ENCODE measurements at regions of chr1 and their contacts with region 1.

Region 1: DNA sequence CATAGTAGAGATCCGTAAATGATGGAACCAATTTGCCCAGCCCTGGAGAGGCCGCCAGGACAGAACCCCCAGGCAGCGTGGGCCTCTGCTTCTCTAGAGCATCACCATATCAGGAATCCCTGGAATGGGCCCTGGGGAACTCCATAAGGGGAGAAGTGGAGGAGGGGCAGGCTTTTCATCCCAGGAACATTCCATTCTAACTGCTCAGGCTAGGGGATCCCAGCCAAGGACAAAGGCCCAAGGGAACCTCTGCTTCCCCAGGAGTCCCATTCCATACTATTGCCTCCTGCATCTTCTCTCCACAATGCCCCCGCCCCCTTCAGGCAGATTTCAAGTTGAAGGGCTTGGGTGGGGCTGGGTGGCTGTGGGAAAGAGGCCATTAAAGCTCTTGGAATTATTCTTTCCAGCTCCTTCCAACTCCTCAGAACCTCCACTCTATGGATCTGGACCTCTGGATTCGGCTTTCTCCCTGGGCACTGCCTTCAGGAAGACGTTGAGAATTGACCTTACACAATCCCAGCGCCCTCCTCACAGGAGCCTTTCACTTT is 6.0 kb downstream of the TRNP1 start:
- DNase-seq: peak; percentile 80 to 90
- ATAC-seq: peak; percentile 48 to 56
- H3K4me3 ChIP-seq: peak overlapping the region; percentile 96; the same call in 2 of the 3 replicates
- H3K27ac ChIP-seq: peak overlapping the region; percentile 100
- H3K4me1 ChIP-seq: peaks cover 71% of the 10 kb centered on the region
- CTCF ChIP-seq: no peak
- EP300 ChIP-seq: peak in 1 of 2 experiments; percentile 28; a peak in 1 of 5 replicates
- POLR2A ChIP-seq: no peak
- RAD21 ChIP-seq: peak in 1 of 2 experiments; percentile 4; a peak in 1 of 5 replicates

Region 2: GRCh38 chr1:26959722-26960615 is 39.5 kb before region 1 on chr1 and contains the start of gene KDF1:
- CTCF ChIA-PET with region 1: interaction called, 188 read pairs
- POLR2A ChIA-PET with region 1: interaction called, 3 read pairs
- DNase-seq: no peak
- ATAC-seq: no peak
- H3K4me3 ChIP-seq: peak within 1 kb of the TSS; percentile 32; the same call in 1 of the 3 replicates
- H3K27ac ChIP-seq: peak within 1 kb of the TSS; percentile 48 to 73; a peak in 5 of 6 replicates
- H3K4me1 ChIP-seq: peaks cover 25% of the 10 kb centered on the region
- CTCF ChIP-seq: no peak
- EP300 ChIP-seq: no peak
- POLR2A ChIP-seq: no peak
- RAD21 ChIP-seq: no peak
- polyA plus RNA-seq, gene KDF1: not detected in 2 replicates

Region 3: GRCh38 chr1:27010989-27011764 is 11.7 kb after region 1 on chr1:
- CTCF ChIA-PET with region 1: interaction called, 49 read pairs
- POLR2A ChIA-PET with region 1: interaction called, 5 read pairs
- DNase-seq: peak; percentile 81 to 83
- ATAC-seq: peak; percentile 30 to 38
- H3K4me3 ChIP-seq: no peak overlapping the region
- H3K27ac ChIP-seq: peak overlapping the region; percentile 72 to 83
- H3K4me1 ChIP-seq: peaks cover 53% of the 10 kb centered on the region
- CTCF ChIP-seq: no peak
- EP300 ChIP-seq: no peak
- POLR2A ChIP-seq: no peak
- RAD21 ChIP-seq: 0 out of 5 replicates have a peak, but pooled peaks of 1 of the 2 experiments have one; percentile 15

Region 4: GRCh38 chr1:27021354-27022031 is 22.0 kb after region 1 on chr1:
- CTCF ChIA-PET with region 1: interaction called, 22 read pairs
- POLR2A ChIA-PET with region 1: no interaction called
- DNase-seq: no peak
- ATAC-seq: no peak
- H3K4me3 ChIP-seq: no peak overlapping the region
- H3K27ac ChIP-seq: no peak overlapping the region
- H3K4me1 ChIP-seq: no peaks in the 10 kb centered on the region
- CTCF ChIP-seq: no peak
- EP300 ChIP-seq: no peak
- POLR2A ChIP-seq: no peak
- RAD21 ChIP-seq: no peak

Region 5: DNA sequence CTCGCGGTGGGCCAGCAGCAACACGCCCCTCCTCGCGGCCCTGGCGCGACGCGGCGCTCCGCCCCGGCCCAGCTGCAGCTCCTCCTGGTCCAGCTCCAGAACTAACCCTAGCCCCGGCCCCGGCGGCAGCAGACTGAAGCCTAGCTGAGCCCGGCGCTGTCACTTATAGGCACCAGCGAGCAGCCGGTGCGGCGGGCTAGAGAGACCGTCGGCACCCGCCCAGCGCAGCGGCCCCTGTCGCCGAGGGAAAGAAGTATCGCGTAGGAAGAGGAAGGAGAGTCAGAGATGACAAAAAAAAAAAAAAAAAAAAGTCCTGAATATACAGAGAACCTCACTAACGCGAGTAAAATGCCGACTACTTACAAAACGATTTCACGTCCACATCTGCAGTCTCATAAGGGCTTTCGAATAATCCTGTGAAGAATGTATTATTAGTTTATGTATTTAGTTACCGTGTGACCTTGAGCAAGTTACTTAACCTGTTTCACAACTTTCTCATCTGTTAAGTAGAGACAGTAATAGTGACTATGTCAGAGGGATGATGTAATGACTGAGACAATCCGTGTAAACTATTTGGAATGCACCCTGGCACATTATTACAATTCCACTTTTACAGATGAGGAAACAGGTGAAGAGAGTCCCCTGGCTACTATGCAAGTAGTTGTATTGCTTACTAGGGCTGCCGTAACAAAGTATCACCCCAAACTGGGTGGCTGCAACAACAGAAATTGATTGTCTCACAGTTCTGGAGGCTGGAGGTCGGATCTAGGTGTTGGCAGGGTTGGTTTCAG is 155.7 kb after region 1 on chr1 and contains the start of gene SLC9A1:
- CTCF ChIA-PET with region 1: no interaction called
- POLR2A ChIA-PET with region 1: no interaction called
- DNase-seq: peak; percentile 60 to 90
- ATAC-seq: peak; percentile 91 to 96
- H3K4me3 ChIP-seq: peak within 1 kb of the TSS; percentile 91
- H3K27ac ChIP-seq: peak within 1 kb of the TSS; percentile 98 to 100
- H3K4me1 ChIP-seq: peaks cover 28% of the 10 kb centered on the region
- CTCF ChIP-seq: peak; percentile 63
- EP300 ChIP-seq: peak; percentile 15 to 25; a peak in 2 of 5 replicates
- POLR2A ChIP-seq: peak; percentile 97
- RAD21 ChIP-seq: peak; percentile 15 to 28; a peak in 1 of 5 replicates
- polyA plus RNA-seq, gene SLC9A1: 8.0 and 11.1 TPM in 2 replicates